Ovary (tissue), 10 donors: ENCODE measurements at regions of chr13 and their contacts with region 1.

Region 1: GRCh38 chr13:75202981-75203380 is 279.0 kb downstream of the TBC1D4 start:
- DNase-seq: no peak
- H3K4me3 ChIP-seq: no peak overlapping the region
- H3K27ac ChIP-seq: no peak overlapping the region
- H3K4me1 ChIP-seq: peaks cover 2% of the 10 kb centered on the region
- H3K27me3 ChIP-seq: no peaks in the 10 kb centered on the region
- CTCF ChIP-seq: no peak
- EP300 ChIP-seq: no peak
- POLR2A ChIP-seq: no peak

Region 2: DNA sequence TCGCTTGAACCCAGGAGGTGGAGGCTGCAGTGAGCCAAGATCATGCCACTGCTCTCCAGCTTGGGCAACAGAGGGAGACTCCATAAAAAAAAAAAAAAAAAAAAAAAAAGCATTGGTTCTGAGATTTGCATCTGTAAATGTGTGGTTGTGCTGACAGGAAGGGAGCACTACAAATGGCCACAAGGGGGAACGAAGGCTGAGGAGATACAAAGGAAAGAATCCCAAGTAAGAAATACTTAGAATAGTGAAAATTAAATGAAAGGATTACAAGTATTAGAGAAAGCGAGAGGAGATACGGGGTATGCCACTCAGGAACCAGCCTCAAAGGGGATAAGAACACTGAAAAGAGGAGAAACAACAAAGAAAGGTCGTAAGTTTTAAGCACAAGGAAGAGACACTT is 1353.7 kb before region 1 on chr13:
- intact Hi-C with region 1: loop called in 1 of 4 experiments (anchors 10 kb)
- DNase-seq: no peak
- H3K4me3 ChIP-seq: no peak overlapping the region
- H3K27ac ChIP-seq: no peak overlapping the region
- H3K4me1 ChIP-seq: no peaks in the 10 kb centered on the region
- H3K27me3 ChIP-seq: no peaks in the 10 kb centered on the region
- CTCF ChIP-seq: no peak
- EP300 ChIP-seq: no peak
- POLR2A ChIP-seq: no peak

Region 3: DNA sequence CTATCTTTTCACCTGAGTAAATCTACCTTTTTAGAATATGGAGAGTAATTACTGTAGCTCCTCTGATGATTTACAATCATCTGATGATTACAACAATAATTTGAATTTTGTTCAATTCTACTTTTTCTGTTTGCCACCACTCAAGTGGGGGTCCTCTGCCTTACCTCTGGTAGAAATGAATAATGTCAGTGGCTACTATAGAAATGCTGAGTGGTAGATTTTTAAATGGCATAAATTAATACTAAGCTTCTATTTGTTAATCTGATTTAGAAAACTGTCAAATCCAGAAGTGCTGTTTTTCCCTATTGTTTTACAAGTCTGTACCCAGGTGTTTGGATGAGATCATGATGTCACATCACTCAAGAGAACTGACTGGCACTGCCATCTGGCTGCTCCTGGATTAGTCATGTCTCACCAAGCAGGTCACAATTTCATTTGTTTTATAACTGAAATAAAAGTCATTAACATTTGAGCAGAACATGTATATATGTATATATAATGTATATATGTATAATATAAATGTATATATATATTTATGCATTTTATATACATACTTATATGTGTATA is 215.8 kb before region 1 on chr13:
- intact Hi-C with region 1: no loop called
- DNase-seq: no peak
- H3K4me3 ChIP-seq: no peak overlapping the region
- H3K27ac ChIP-seq: no peak overlapping the region
- H3K4me1 ChIP-seq: no peaks in the 10 kb centered on the region
- H3K27me3 ChIP-seq: no peaks in the 10 kb centered on the region
- CTCF ChIP-seq: no peak
- EP300 ChIP-seq: no peak
- POLR2A ChIP-seq: no peak